ENCODE measurements at regions of chr2 and their contacts with region 1.

Region 1: DNA sequence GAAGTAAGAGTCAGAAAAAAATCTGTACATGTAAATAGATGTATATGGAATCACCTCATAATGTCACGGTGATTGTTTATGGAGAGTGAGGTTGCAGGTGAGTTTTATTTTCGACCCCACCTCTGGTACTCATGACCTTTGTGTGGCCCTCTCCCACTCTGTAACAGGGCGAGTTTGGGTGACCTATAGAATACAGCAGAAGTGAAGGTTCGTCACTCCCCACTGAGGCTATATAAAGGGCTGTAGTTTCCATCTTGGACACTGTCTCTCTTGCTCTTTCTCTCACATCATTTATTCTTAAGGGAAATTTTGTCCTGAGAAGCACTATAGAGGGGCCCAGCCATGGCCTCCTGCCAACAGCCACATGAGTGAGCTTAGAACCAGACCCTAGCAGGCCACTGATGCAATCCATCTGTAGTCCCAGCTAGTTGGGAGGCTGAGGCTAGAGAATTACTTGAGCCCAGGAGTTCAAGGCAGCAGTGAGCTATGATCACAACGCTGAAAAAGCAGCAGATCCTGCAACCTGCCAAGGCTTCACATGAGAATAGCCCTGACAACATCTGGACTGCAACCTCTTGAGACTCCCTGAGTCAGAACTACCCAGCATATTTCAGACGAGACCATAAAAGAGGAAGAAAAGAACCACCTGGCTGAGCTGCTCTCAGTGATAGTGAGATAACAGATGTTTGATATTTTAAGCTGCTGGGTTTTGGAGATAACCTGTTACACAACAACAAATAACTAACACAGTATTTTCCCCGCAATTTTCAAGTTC is 74.3 kb upstream of the SLC1A4 start:
- DNase-seq: no peak
- ATAC-seq: no peak
- H3K4me3 ChIP-seq: no peak overlapping the region
- H3K27ac ChIP-seq: no peak overlapping the region
- H3K4me1 ChIP-seq: peaks cover 2 to 12% of the 10 kb centered on the region in 2 experiments; a peak in 1 of 4 replicates
- H3K27me3 ChIP-seq: no peaks in the 10 kb centered on the region
- CTCF ChIP-seq: no peak
- POLR2A ChIP-seq: no peak
- RAD21 ChIP-seq: no peak

Region 2: DNA sequence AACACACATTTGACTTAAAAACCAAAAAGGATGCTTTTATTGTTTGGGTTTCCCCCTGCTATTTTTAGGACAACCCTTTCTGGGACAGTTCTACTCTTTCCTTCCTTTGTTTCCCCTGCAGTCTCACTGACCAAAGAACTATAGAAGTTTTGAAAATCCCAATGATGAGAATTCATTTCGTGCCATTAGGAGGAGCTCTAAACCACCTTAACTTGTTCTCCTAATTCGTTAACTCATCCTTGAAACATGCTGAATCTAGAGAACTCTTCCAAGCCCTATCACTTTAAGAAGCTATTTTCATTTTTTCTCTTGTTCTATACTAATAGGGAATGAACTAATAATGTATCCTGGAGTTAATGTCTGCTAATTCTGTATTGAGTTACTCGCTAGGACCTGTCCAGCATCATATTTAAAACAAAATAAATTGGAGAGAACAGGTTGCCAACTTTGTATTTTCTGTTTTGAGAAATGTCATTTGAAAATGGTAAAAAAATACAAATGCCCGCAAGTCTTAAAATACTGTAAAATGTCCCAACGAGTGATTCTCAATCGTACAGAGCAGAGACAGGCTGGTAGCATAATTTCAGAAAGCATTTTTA is 327.9 kb before region 1 on chr2:
- CTCF ChIA-PET with region 1: interaction called, 4 read pairs
- POLR2A ChIA-PET with region 1: no interaction called
- RAD21 ChIA-PET with region 1: no interaction called
- intact Hi-C with region 1: loop called (anchors 2 kb)
- DNase-seq: peak; percentile 34
- ATAC-seq: peak; percentile 77
- H3K4me3 ChIP-seq: no peak overlapping the region
- H3K27ac ChIP-seq: no peak overlapping the region
- H3K4me1 ChIP-seq: no peaks in the 10 kb centered on the region
- H3K27me3 ChIP-seq: no peaks in the 10 kb centered on the region
- CTCF ChIP-seq: peak; percentile 56 to 73 (median 72); a peak in 5 of 6 replicates
- POLR2A ChIP-seq: no peak
- RAD21 ChIP-seq: peak; percentile 84

Region 3: DNA sequence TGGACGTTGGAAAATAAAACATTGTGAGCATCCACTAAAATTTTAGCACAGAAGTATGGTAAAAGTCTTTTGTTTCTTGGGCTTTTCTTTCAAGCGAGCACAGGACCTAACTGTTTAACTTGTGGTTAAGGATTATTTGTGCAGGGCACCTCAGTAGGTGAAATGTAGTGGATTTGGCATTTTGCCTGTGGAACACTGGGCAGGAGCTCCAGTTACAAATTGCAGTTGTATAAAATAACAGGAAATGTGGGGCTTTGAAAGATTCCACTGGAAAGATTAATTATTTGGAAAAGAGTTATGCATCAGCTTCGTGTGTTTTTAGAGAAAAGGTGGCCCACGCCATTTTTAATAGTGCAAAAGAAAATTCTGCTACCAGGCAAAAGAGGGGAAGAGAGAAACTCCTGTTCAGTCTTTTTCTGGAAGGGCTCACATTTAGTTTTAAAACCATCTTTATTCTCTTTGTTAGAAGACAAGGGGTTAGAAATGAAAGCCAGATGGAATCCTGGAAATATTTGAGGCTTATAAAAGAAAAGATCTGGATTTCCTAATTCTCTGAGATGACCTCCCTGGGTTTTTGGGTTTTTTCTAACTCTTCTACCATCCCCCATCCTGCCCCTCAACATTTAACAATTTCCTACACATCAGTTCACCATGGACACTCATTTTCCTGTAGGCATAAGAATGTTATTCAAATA is 116.9 kb before region 1 on chr2:
- CTCF ChIA-PET with region 1: no interaction called
- POLR2A ChIA-PET with region 1: no interaction called
- RAD21 ChIA-PET with region 1: no interaction called
- intact Hi-C with region 1: no loop called
- DNase-seq: no peak
- ATAC-seq: peak; percentile 52; the same call in 1 of the 2 replicates
- H3K4me3 ChIP-seq: no peak overlapping the region
- H3K27ac ChIP-seq: peak overlapping the region; percentile 58
- H3K4me1 ChIP-seq: peaks cover 36 to 41% of the 10 kb centered on the region in 2 experiments
- H3K27me3 ChIP-seq: no peaks in the 10 kb centered on the region
- CTCF ChIP-seq: no peak
- POLR2A ChIP-seq: no peak
- RAD21 ChIP-seq: no peak

Region 4: DNA sequence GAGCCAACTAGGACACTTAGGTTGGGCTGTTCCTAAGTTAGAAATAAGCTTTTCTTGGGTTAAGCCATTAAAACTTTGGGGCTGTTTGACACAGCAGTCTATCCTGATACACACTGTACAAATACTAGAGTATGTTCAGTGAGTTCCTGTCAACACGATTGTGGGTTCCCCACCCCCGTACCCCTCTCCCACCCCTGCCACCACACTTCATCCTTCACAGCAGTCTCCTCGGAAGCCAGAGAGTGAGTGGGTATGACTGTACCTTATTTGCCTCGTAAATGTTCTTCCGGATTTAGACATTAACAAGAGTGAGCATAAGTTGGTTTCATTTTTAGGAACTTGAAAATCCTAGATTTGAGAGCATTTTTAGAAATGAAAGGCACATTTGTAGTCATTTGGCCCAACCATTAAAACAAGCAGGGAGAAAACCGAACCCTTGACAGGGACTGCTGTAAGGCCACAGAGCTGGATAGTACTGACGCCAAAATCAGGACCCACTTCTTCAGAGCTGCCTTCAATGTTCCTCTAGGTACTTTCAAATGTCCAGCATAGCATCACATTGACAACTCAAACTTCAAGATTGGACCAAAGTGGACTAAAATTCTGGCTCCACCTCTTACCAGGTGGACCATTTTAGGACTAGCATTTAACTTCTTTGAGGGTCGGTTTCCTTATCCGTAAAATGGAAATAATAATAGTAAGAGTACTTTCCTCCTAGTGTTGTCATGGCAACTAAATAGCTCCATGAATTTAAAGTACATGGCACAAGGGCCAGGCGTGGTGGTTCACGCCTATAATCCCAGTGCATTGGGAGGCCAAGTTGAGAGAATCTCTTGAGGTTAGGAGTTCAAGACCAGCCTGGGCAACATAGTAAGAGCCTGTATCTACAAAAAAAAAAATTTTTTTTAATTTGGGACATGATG is 94.9 kb before region 1 on chr2:
- CTCF ChIA-PET with region 1: no interaction called
- POLR2A ChIA-PET with region 1: no interaction called
- RAD21 ChIA-PET with region 1: no interaction called
- intact Hi-C with region 1: no loop called
- DNase-seq: no peak
- ATAC-seq: no peak
- H3K4me3 ChIP-seq: no peak overlapping the region
- H3K27ac ChIP-seq: no peak overlapping the region
- H3K4me1 ChIP-seq: peaks cover 0 to 20% of the 10 kb centered on the region in 2 experiments; a peak in 1 of 4 replicates
- H3K27me3 ChIP-seq: no peaks in the 10 kb centered on the region
- CTCF ChIP-seq: no peak
- POLR2A ChIP-seq: no peak
- RAD21 ChIP-seq: no peak

Region 5: DNA sequence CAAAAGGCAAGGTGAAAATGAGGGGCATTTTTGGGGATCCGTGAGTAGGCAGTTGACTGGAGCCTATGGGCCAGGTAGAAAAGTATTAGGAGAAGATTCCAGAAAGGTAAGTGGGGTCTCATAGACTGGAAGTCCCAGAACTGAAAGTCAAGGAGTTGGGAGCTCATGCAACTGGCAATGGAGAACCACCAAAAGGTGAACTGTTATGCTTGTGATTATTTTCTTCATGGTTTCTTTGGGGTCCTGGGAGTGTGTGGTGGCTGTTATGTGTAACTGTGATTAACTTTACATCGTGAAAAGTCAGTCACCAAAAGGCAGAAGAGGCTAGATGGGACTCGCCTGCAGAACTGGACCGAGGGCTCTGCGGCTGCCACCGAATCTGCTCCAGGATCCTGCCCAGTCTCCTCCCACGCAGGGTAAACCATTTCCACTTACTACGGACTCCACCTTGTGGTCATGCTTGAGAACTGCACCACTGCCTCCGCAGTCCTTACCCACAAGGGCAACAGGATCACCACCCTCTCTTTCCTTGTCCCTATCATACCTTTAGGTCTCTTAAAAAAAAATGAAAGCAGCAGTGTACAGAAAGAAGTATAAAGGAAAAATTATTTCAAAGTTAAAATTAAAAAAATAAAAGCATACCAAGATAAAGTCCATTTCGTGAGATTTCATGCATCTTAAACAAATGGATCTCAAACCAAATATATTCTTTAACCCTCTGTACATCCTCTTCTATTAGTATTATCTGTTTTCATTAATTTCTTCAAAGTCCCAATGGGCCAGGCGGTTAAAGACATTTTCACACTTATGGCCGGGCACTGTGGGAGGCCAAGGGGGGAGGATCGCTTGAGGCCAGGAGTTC is 125.7 kb after region 1 on chr2:
- CTCF ChIA-PET with region 1: interaction called, 32 read pairs
- POLR2A ChIA-PET with region 1: no interaction called
- RAD21 ChIA-PET with region 1: interaction called, 4 to 8 read pairs
- intact Hi-C with region 1: loop called (anchors 1 kb)
- DNase-seq: peak; percentile 69
- ATAC-seq: peak; percentile 99
- H3K4me3 ChIP-seq: 0 out of 4 replicates have a peak overlapping the region, but pooled peaks of 1 of the 2 experiments have one; percentile 13
- H3K27ac ChIP-seq: no peak overlapping the region
- H3K4me1 ChIP-seq: peaks cover 3 to 5% of the 10 kb centered on the region in 2 experiments; a peak in 1 of 4 replicates
- H3K27me3 ChIP-seq: no peaks in the 10 kb centered on the region
- CTCF ChIP-seq: peak; percentile 85 to 94 (median 86)
- POLR2A ChIP-seq: no peak
- RAD21 ChIP-seq: peak; percentile 92

Region 6: DNA sequence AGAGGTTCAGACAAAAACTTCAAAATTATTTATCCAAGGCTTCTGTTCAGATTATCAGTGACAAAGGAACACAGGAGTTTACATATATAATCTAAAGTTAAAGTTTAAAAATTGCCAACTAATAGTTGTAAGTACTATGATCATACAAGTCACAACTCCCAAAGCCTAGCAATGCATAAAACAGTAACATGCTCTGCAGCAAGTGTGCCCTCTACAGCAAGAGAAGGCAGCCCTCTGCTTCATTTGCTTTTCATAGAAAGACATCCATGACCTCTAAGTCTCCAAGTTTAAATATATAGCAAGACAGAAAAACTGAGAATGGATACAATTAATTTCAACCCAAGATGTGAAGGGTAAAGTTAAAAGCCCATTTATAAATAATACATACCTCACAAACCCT is 201.7 kb after region 1 on chr2:
- CTCF ChIA-PET with region 1: no interaction called
- POLR2A ChIA-PET with region 1: no interaction called
- RAD21 ChIA-PET with region 1: no interaction called
- intact Hi-C with region 1: no loop called
- DNase-seq: no peak
- ATAC-seq: no peak
- H3K4me3 ChIP-seq: no peak overlapping the region
- H3K27ac ChIP-seq: no peak overlapping the region
- H3K4me1 ChIP-seq: 0 out of 4 replicates have a peak, but pooled peaks cover 0 to 3% of the 10 kb centered on the region in 2 experiments
- H3K27me3 ChIP-seq: no peaks in the 10 kb centered on the region
- CTCF ChIP-seq: no peak
- POLR2A ChIP-seq: no peak
- RAD21 ChIP-seq: no peak

Region 7: GRCh38 chr2:65165558-65165957 is 250.6 kb after region 1 on chr2:
- CTCF ChIA-PET with region 1: interaction called, 7 read pairs
- POLR2A ChIA-PET with region 1: no interaction called
- RAD21 ChIA-PET with region 1: no interaction called
- intact Hi-C with region 1: loop called (anchors 5 kb)
- DNase-seq: no peak
- ATAC-seq: no peak
- H3K4me3 ChIP-seq: no peak overlapping the region
- H3K27ac ChIP-seq: no peak overlapping the region
- H3K4me1 ChIP-seq: peaks cover 4 to 22% of the 10 kb centered on the region in 2 experiments; a peak in 3 of 4 replicates
- H3K27me3 ChIP-seq: no peaks in the 10 kb centered on the region
- CTCF ChIP-seq: no peak
- POLR2A ChIP-seq: no peak
- RAD21 ChIP-seq: no peak

Region 8: GRCh38 chr2:65576861-65577601 is 662.1 kb after region 1 on chr2:
- CTCF ChIA-PET with region 1: interaction called, 3 read pairs
- POLR2A ChIA-PET with region 1: no interaction called
- RAD21 ChIA-PET with region 1: no interaction called
- intact Hi-C with region 1: loop called (anchors 2 kb)
- DNase-seq: peak; percentile 90
- ATAC-seq: peak; percentile 83
- H3K4me3 ChIP-seq: peak overlapping the region; percentile 12 to 31; a peak in 3 of 4 replicates
- H3K27ac ChIP-seq: peak overlapping the region; percentile 76
- H3K4me1 ChIP-seq: peaks cover 27 to 69% of the 10 kb centered on the region in 2 experiments
- H3K27me3 ChIP-seq: no peaks in the 10 kb centered on the region
- CTCF ChIP-seq: no peak
- POLR2A ChIP-seq: no peak
- RAD21 ChIP-seq: no peak

Measured in HCT116 (cell line).